ENCODE measurements at regions of chr17 and their contacts with region 1.

Region 1: GRCh38 chr17:53234138-53234537 is 588.6 kb upstream of the KIF2B start:
- DNase-seq: no peak
- H3K4me3 ChIP-seq: no peak overlapping the region
- H3K27ac ChIP-seq: no peak overlapping the region
- H3K4me1 ChIP-seq: no peaks in the 10 kb centered on the region
- H3K27me3 ChIP-seq: no peaks in the 10 kb centered on the region
- CTCF ChIP-seq: no peak
- POLR2A ChIP-seq: no peak

Region 2: DNA sequence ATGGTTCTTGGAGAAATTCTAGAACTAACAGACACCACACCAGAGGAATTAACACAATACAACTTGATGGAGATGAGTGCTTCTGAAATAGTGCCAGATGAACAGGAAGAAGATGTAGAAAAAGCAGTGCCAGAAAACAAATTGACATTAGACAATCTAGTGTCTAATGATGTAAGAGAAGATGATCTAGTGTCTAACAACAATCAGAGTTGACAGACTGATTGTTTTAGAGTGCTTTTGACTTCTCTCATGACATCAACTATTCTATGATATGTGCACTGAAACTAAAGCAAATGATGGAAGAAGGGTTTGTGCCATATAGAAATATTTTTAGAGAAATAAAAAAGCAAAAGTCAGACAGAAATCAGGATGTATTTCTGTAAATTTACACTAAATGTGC is 57.5 kb before region 1 on chr17:
- intact Hi-C with region 1: loop called (anchors 10 kb)
- DNase-seq: no peak
- H3K4me3 ChIP-seq: no peak overlapping the region
- H3K27ac ChIP-seq: no peak overlapping the region
- H3K4me1 ChIP-seq: no peaks in the 10 kb centered on the region
- H3K27me3 ChIP-seq: no peaks in the 10 kb centered on the region
- CTCF ChIP-seq: no peak
- POLR2A ChIP-seq: no peak

Measured in thyroid gland (tissue), 4 donors.